Activated T-helper 1 cell treated with anti-CD3 and anti-CD28 coated beads, Interleukin-12 subunit alpha, Interleukin-12 subunit beta, Interleukin-2, Interleukin-4 antibody, amounts not matched to agents 30 ng/mL and 10 ng/mL and 1 ng/mL, durations not matched to agents 14 hours and 24 hours and 36 hours (primary cell): ENCODE measurements at regions of chrX and their contacts with region 1.

Region 1: GRCh38 chrX:119606280-119607015 is at the start of gene NKRF:
- DNase-seq: peak; percentile 86
- H3K4me3 Mint-ChIP-seq: peak within 1 kb of the TSS; percentile 96
- H3K27ac Mint-ChIP-seq: peak within 1 kb of the TSS; percentile 97
- H3K4me1 Mint-ChIP-seq: peaks cover 30% of the 10 kb centered on the region
- H3K27me3 Mint-ChIP-seq: no peaks in the 10 kb centered on the region
- total RNA-seq, gene NKRF: 26.8 and 29.0 TPM in 2 replicates

Region 2: GRCh38 chrX:119516157-119516702 is 90.2 kb before region 1 on chrX:
- intact Hi-C with region 1: loop called (anchors 1 kb)
- DNase-seq: peak; percentile 25
- H3K4me3 Mint-ChIP-seq: no peak overlapping the region
- H3K27ac Mint-ChIP-seq: peak overlapping the region; percentile 2
- H3K4me1 Mint-ChIP-seq: peaks cover 8% of the 10 kb centered on the region
- H3K27me3 Mint-ChIP-seq: peaks cover 2% of the 10 kb centered on the region

Region 3: GRCh38 chrX:119574394-119575266 is 31.8 kb before region 1 on chrX and contains the start of gene UBE2A:
- intact Hi-C with region 1: loop called (anchors 1 kb)
- DNase-seq: peak; percentile 81
- H3K4me3 Mint-ChIP-seq: peak within 1 kb of the TSS; percentile 86
- H3K27ac Mint-ChIP-seq: peak within 1 kb of the TSS; percentile 77
- H3K4me1 Mint-ChIP-seq: peaks cover 19% of the 10 kb centered on the region
- H3K27me3 Mint-ChIP-seq: no peaks in the 10 kb centered on the region
- total RNA-seq, gene UBE2A: 60.1 and 61.3 TPM in 2 replicates

Region 4: DNA sequence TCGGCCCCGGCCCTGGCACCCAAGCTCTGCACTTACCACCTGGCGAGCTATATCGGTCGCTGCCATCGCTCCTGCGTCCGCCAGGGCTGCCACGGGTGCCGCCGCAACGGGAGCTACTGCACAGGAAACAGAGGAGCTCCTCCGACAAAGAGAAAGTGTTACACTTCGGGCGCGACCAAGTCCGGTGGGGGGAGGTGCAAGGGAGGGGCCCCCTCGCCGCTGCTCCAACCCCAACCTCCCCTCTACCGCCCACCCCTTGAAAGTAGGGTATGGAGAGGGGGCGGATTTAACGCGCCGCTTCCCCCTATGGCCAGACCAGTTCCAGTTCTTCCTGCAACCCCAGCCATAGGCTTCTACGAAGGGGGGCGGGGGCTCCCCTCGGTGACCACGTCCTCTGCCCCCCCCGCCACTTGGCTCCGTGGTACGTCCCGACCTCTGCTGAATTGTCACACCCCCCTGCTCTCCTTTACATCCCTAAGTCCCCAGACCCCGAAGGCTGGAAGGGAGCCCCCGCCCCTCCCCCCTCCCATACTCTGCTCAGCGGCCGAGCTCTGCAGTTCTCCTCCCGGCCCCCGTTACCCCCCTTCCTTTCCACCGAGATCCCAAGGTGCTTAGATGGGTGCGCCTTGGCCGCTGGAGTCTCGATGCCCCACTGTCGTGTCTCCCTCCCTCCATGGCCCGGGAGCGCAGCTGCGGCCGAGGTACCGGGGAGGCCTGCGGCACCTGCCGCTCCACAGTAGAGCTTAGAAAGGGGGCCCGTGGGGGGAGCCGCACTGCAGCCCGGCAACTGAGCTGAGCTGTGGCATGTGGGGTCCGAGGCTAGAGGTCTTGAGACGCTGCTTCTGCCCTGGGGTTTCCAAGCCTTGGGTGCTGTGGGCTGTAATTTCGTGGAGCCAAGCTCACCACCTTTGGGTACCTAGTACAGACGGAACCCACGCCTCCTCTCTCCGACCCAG is 86.9 kb after region 1 on chrX and contains the start of gene SEPTIN6:
- intact Hi-C with region 1: loop called (anchors 1 kb)
- DNase-seq: peak; percentile 78
- H3K4me3 Mint-ChIP-seq: peak within 1 kb of the TSS; percentile 93
- H3K27ac Mint-ChIP-seq: peak within 1 kb of the TSS; percentile 94
- H3K4me1 Mint-ChIP-seq: peaks cover 6% of the 10 kb centered on the region
- H3K27me3 Mint-ChIP-seq: peaks cover 2% of the 10 kb centered on the region
- total RNA-seq, gene SEPTIN6: 159 and 172 TPM in 2 replicates

Region 5: DNA sequence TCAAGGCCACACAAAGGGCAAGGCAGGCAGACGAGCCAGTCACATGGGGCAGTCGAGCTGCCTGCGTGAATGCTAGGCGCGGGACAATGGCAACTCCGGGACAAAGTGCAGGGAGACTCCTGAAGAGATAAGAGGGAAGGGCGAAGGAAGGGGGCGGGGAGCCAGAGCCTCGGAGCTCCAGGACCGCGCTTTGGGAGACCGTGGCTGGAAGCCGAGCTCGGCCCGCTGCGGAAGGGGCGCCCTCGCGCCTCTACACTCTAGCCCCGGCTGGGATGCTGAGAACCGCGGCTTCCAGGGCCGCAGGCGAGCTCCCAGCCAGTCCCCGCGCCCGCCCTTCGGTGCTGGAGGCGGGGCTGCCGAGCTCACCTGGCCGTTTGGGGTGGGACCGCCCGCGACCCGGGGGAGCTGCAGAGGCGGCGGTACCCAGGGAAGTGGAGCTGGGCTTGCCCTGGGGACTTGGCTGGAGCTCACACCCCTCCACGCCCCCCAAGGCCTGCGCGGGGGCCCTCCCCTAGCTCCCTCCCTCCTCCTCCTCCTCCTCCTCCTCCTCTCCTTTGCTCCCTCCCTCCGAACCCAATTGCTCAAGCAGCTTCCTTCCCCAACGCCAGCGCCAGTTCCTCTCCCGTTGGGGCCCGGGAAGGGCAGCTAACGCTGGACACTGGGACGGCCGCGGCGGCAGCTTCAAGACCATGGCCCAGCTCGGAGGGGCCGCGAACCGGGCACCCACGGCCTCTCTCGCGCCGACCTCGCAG is 151.7 kb after region 1 on chrX and contains the start of gene SOWAHD:
- intact Hi-C with region 1: loop called (anchors 1 kb)
- DNase-seq: peak; percentile 3
- H3K4me3 Mint-ChIP-seq: peak within 1 kb of the TSS; percentile 77
- H3K27ac Mint-ChIP-seq: peak within 1 kb of the TSS; percentile 94
- H3K4me1 Mint-ChIP-seq: peaks cover 48% of the 10 kb centered on the region
- H3K27me3 Mint-ChIP-seq: no peaks in the 10 kb centered on the region
- total RNA-seq, gene SOWAHD: 0.21 and 0.34 TPM in 2 replicates

Region 6: GRCh38 chrX:119943185-119943988 is 336.9 kb after region 1 on chrX and contains the start of gene NKAP:
- intact Hi-C with region 1: loop called (anchors 1 kb)
- DNase-seq: peak; percentile 78
- H3K4me3 Mint-ChIP-seq: peak within 1 kb of the TSS; percentile 93
- H3K27ac Mint-ChIP-seq: peak within 1 kb of the TSS; percentile 97
- H3K4me1 Mint-ChIP-seq: peaks cover 16% of the 10 kb centered on the region
- H3K27me3 Mint-ChIP-seq: peaks cover 2% of the 10 kb centered on the region
- total RNA-seq, gene NKAP: 9.4 and 10.1 TPM in 2 replicates